PC-9 (cell line): ENCODE measurements at regions of chr9 and their contacts with region 1.

Region 1: DNA sequence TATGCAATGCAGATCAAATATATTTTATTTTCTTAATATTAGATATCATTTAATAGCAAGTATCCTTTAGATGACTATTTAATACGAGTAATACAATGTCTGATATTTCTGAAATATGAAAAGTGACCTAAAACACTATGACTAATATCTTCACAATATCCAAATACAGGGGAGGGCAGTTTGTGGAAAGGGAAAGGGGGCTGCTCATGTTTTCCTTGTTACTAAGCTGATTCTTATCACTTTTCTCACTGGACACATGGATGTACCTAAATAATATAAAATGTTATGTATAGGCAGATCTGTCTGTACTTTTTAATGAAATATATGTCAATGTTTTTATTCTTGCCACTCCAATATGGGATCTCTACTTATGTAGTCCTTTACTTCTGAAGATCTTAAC is 1879.1 kb upstream of the ACO1 start:
- DNase-seq: no peak
- H3K4me3 ChIP-seq: no peak overlapping the region
- H3K27ac ChIP-seq: no peak overlapping the region
- H3K4me1 ChIP-seq: no peaks in the 10 kb centered on the region
- H3K27me3 ChIP-seq: no peaks in the 10 kb centered on the region
- CTCF ChIP-seq: no peak

Region 2: GRCh38 chr9:29778281-29778849 is 726.9 kb before region 1 on chr9:
- CTCF ChIA-PET with region 1: no interaction called
- POLR2A ChIA-PET with region 1: no interaction called
- intact Hi-C with region 1: no loop called
- DNase-seq: no peak
- H3K4me3 ChIP-seq: no peak overlapping the region
- H3K27ac ChIP-seq: no peak overlapping the region
- H3K4me1 ChIP-seq: no peaks in the 10 kb centered on the region
- H3K27me3 ChIP-seq: no peaks in the 10 kb centered on the region
- CTCF ChIP-seq: no peak

Region 3: DNA sequence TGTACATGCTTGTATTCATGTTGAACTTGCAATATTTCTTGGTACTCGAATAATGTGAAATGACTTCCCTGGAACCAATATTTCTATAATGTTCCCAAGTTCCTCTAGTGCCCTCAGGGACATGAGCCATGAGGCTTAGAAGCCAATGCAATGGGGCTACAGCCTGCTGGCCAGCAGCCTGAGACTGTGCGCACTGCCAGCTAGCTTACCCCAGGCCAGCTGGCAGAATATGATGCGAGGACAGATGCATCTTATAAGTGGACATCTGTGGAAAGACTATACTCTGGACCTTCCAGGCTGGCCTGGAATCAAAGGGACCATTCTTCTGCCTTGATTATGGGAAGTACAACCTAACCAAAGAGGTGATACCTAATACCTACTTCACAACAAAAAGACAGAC is 17.2 kb after region 1 on chr9:
- CTCF ChIA-PET with region 1: no interaction called
- POLR2A ChIA-PET with region 1: no interaction called
- intact Hi-C with region 1: loop called (anchors 1 kb)
- DNase-seq: no peak
- H3K4me3 ChIP-seq: no peak overlapping the region
- H3K27ac ChIP-seq: no peak overlapping the region
- H3K4me1 ChIP-seq: no peaks in the 10 kb centered on the region
- H3K27me3 ChIP-seq: no peaks in the 10 kb centered on the region
- CTCF ChIP-seq: no peak